GM18951 (cell line): ENCODE measurements at regions of chr4 and their contacts with region 1.

Region 1: GRCh38 chr4:8472689-8473197 is 32.2 kb downstream of the TRMT44 start:
- POLR2A ChIP-seq: no peak

Region 2: GRCh38 chr4:8238515-8239053 is 234.2 kb before region 1 on chr4:
- in situ Hi-C with region 1: no loop called
- POLR2A ChIP-seq: no peak

Region 3: DNA sequence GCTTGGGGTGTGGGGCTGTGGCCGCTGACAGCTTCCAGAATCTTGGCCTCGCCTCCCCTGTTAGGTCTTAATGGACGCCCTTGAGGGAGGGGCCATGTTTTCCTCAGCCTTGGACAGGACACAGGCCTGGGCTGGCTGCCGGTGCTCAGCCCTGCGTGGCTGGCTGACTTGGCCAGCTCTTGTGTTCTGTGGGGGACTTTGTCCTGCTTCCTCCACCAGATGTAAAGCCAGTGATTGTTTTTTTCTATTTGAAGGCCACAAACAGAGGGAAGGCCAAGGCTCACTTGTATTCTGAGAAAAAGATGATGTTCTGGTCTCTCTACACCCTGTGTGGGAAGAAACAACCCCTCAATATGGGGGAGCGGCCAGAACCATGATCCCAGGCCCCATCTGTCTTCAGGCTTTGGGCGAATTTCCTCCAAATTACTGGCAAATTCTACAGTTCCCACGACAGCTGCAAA is 131.9 kb before region 1 on chr4:
- in situ Hi-C with region 1: no loop called
- POLR2A ChIP-seq: no peak

Region 4: DNA sequence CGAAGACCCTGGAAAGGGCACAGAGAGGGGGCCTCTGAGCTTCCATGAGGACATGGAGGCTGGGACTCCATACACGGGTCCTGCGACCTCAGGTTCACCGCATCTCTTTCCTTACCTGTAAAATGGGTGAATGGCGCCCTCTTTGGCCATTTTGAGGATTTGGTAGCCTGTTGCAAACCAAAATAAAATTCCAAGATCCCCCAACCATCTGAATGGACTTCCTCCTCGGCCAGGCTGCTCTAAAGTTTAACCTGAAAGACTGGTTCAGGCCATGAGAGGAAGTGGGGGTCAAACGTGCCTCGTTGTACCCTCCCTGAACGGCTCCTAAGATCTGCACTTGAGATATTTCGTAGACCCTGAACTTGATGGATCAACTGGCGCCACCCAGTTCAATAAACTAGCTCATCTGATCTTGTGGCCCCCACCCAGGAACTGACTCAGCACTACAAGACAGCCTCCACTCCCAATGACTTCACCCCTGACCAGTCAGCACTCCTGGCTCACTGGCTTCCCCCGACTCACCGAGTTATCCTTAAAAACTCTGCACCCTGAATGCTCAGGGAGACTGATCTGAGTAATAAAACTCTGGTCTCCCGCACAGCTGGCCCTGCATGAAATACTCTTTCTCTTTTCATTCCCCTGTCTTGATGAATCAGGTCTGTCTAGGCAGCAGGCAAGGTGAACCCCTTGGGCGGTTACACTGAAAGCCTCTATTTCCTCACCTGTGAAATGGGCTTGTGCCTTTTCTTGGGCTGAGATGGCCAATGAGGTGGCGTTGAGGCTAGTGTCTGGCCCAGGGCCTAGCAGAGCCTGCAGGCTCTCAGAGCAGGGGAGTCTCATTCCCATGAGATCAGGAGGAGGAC is 74.6 kb after region 1 on chr4:
- in situ Hi-C with region 1: loop called (anchors 10 kb)
- POLR2A ChIP-seq: no peak